PC-9 (cell line): ENCODE measurements at regions of chr6 and their contacts with region 1.

Region 1: GRCh38 chr6:17589406-17590096 is 10.6 kb upstream of the FAM8A1 start:
- DNase-seq: peak; percentile 73 to 94
- H3K4me3 ChIP-seq: no peak overlapping the region
- H3K27ac ChIP-seq: peak overlapping the region; percentile 24; the same call in 1 of the 2 replicates
- H3K4me1 ChIP-seq: peaks cover 11% of the 10 kb centered on the region
- H3K27me3 ChIP-seq: no peaks in the 10 kb centered on the region
- CTCF ChIP-seq: no peak; the same call in 1 of the 2 replicates

Region 2: DNA sequence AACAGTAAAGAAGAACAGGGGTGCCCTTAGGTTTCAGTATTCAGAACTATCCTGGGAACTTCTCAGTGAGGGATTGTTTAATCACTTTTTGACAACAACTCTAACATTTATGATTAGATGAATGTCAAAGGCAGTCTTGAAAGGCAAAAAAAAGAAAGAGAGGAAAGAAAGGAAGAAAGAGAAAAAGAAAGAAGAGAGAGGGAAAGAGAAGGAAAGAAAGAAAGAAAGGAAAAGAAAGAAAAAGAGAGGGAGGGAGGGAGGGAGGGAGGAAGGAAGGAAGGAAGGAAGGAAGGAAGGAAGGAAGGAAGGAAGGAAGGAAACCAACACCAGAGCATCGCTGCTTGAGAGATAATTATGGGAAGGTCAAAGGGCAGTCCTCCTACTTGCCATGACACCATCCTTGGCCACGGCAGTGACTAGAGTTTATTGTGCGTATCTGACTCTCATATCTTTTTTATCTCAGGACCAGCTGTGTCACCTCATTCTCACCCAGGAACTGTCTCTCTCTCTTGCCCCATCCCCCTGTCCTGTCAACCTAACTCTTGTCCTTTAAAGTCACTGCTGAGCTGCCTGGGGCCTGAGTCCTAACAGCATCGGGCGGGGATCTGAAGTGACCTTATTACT is 731.5 kb before region 1 on chr6:
- CTCF ChIA-PET with region 1: interaction called, 15 read pairs
- POLR2A ChIA-PET with region 1: no interaction called
- intact Hi-C with region 1: no loop called
- DNase-seq: no peak
- H3K4me3 ChIP-seq: no peak overlapping the region
- H3K27ac ChIP-seq: no peak overlapping the region
- H3K4me1 ChIP-seq: peaks cover 23% of the 10 kb centered on the region
- H3K27me3 ChIP-seq: no peaks in the 10 kb centered on the region
- CTCF ChIP-seq: no peak

Region 3: DNA sequence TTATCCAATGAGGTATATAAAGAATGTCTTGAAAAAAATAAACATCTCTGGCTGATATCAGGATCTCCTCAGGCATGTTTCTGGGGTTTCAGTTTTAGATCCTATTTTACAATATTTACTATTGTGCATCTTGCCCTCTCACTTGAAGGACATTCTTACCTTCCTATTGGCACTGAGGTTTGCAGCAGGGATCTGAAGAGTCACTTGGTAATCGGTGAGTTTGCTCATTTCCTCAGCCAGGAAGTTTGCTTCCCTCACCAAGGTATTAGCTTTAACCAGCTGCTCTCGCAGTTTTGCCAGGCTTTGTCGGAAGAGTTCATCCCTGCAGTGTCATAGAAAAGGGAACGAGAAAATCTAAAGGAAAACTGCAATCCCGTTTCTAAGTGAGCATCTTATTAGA is 219.1 kb after region 1 on chr6:
- CTCF ChIA-PET with region 1: interaction called, 3 read pairs
- POLR2A ChIA-PET with region 1: interaction called, 3 read pairs
- intact Hi-C with region 1: loop called (anchors 1 kb)
- DNase-seq: no peak
- H3K4me3 ChIP-seq: no peak overlapping the region
- H3K27ac ChIP-seq: no peak overlapping the region
- H3K4me1 ChIP-seq: no peaks in the 10 kb centered on the region
- H3K27me3 ChIP-seq: no peaks in the 10 kb centered on the region
- CTCF ChIP-seq: no peak